HCT116 (cell line): ENCODE measurements at regions of chr2 and their contacts with region 1.

Region 1: GRCh38 chr2:70789304-70790135 is 923 bp downstream of the FIGLA start:
- DNase-seq: peak; percentile 46
- ATAC-seq: peak; percentile 90
- H3K4me3 ChIP-seq: peak overlapping the region; percentile 3 to 42; a peak in 3 of 4 replicates
- H3K27ac ChIP-seq: no peak overlapping the region
- H3K4me1 ChIP-seq: peaks cover 0 to 8% of the 10 kb centered on the region in 2 experiments; a peak in 2 of 4 replicates
- H3K27me3 ChIP-seq: no peaks in the 10 kb centered on the region
- CTCF ChIP-seq: peak; percentile 77 to 84 (median 77)
- POLR2A ChIP-seq: no peak
- RAD21 ChIP-seq: peak; percentile 89

Region 2: DNA sequence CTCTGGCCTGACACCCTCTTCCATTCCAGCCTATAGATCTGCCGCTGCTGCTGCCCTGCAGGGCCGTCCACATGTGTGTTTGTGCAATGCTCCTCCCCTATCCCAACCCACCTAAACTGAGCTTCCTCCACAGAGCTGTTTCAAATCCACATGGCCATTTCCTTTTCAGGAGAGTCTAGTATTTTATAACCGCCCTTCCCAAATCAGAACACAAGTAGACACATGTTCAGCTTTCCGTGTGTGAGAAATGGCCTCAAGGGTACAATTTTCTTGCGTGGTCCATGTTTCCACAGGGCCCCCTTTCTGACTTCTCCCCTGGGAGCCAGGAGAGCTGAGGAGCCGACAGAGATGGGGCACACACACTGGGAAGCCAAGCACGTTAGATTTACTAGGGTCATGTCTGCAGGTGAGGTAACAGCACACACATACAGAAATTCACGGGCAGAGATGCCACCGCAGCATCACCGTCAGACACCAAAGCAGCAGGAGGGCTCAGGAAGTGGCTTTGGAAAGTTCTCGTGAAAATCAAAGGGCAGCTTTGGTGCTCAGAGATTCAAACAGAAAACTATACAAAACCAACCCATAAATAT is 133.0 kb before region 1 on chr2:
- CTCF ChIA-PET with region 1: interaction called, 5 read pairs
- POLR2A ChIA-PET with region 1: no interaction called
- RAD21 ChIA-PET with region 1: no interaction called
- intact Hi-C with region 1: loop called (anchors 1 kb)
- DNase-seq: no peak
- ATAC-seq: no peak
- H3K4me3 ChIP-seq: no peak overlapping the region
- H3K27ac ChIP-seq: no peak overlapping the region
- H3K4me1 ChIP-seq: no peaks in the 10 kb centered on the region
- H3K27me3 ChIP-seq: no peaks in the 10 kb centered on the region
- CTCF ChIP-seq: no peak
- POLR2A ChIP-seq: no peak
- RAD21 ChIP-seq: no peak

Region 3: GRCh38 chr2:70686577-70687460 is 102.7 kb before region 1 on chr2:
- CTCF ChIA-PET with region 1: interaction called, 11 read pairs
- POLR2A ChIA-PET with region 1: no interaction called
- RAD21 ChIA-PET with region 1: no interaction called
- intact Hi-C with region 1: loop called (anchors 10 kb)
- DNase-seq: peak; percentile 48
- ATAC-seq: peak; percentile 99
- H3K4me3 ChIP-seq: no peak overlapping the region
- H3K27ac ChIP-seq: no peak overlapping the region; the same call in 1 of the 2 replicates
- H3K4me1 ChIP-seq: peaks cover 8 to 15% of the 10 kb centered on the region in 2 experiments; a peak in 3 of 4 replicates
- H3K27me3 ChIP-seq: no peaks in the 10 kb centered on the region
- CTCF ChIP-seq: peak; percentile 62 to 92 (median 71); a peak in 5 of 6 replicates
- POLR2A ChIP-seq: no peak
- RAD21 ChIP-seq: peak; percentile 47

Region 4: DNA sequence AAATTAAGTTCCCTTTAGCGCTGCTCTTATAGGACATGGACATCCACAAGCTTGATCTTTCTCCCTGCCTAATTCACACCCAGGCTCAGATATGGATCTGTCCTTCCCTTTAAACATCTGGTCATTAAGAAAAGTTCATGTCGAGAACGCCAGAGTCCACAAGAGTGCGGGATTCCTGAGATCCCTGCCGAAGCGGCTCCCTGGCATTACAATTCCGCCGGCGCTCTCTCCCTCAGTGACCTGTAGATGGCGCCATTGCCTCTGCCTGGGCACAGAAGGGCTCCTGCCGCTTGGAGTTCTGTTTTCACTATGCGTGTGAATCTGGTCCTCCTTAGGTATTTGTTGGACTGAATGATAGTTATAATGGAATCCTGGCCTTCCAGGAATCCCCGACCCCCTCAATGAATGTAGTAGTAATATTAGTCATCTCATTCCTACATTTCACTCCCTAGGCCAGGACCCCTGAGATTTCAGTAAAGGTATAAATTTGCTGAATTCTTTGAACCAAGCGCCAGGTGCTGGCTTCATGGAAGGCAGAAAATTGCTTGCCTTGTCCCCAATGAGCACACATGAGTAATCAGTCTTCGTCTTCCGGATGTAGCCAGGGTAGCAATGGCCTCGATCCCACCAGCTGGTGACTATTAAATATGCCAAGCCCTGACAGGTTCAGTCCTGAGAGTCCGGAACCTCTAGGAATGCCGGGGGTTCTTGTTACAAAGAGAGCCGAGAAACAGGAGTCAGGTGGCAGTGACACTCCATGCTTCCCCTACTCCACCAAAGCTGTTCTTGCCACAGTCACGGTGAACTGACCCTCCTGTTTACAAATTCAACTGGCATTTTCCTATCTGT is 72.5 kb after region 1 on chr2:
- CTCF ChIA-PET with region 1: interaction called, 7 read pairs
- POLR2A ChIA-PET with region 1: no interaction called
- RAD21 ChIA-PET with region 1: no interaction called
- intact Hi-C with region 1: loop called (anchors 1 kb)
- DNase-seq: peak; percentile 71
- ATAC-seq: peak; percentile 97
- H3K4me3 ChIP-seq: no peak overlapping the region; a peak in 1 of 4 replicates
- H3K27ac ChIP-seq: no peak overlapping the region
- H3K4me1 ChIP-seq: peaks cover 0 to 3% of the 10 kb centered on the region in 2 experiments; a peak in 1 of 4 replicates
- H3K27me3 ChIP-seq: no peaks in the 10 kb centered on the region
- CTCF ChIP-seq: peak; percentile 98 to 99 (median 99)
- POLR2A ChIP-seq: no peak
- RAD21 ChIP-seq: peak; percentile 92

Region 5: DNA sequence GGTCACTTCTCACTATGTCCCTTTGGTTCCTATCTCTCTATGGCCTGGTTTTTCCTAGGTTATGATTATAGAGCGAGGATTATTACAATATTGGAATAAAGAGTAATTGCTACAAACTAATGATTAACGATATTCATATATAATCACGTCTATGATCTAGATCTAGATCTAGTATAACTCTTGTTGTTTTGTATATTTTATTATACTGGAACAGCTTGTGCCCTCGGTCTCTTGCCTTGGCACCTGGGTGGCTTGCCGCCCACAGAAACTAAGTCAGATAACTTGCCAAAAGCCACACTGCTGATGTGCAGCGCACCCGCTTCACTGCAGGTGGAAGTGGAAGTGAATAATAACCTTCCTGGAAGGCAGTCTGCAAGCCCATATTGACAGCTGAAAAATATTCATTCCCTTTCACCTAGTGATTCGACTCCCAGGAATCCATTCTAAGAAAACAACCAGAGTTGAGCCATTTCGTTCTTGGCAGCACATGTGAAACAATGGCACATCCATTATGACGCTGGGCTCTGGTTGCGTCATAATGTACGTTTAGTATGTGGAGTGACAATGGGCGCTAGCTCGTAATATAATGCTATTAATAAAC is 188.2 kb after region 1 on chr2:
- CTCF ChIA-PET with region 1: no interaction called
- POLR2A ChIA-PET with region 1: no interaction called
- RAD21 ChIA-PET with region 1: no interaction called
- intact Hi-C with region 1: loop called (anchors 1 kb)
- DNase-seq: no peak
- ATAC-seq: no peak
- H3K4me3 ChIP-seq: peak overlapping the region in 1 of 2 experiments; percentile 64; a peak in 3 of 4 replicates
- H3K27ac ChIP-seq: no peak overlapping the region
- H3K4me1 ChIP-seq: peaks cover 7 to 21% of the 10 kb centered on the region in 2 experiments; a peak in 3 of 4 replicates
- H3K27me3 ChIP-seq: no peaks in the 10 kb centered on the region
- CTCF ChIP-seq: 0 out of 6 replicates have a peak, but pooled peaks of 1 of the 3 experiments have one; percentile 21
- POLR2A ChIP-seq: no peak
- RAD21 ChIP-seq: no peak

Region 6: GRCh38 chr2:72350852-72351251 is 1561.3 kb after region 1 on chr2:
- CTCF ChIA-PET with region 1: no interaction called
- POLR2A ChIA-PET with region 1: no interaction called
- RAD21 ChIA-PET with region 1: no interaction called
- intact Hi-C with region 1: no loop called
- DNase-seq: no peak
- ATAC-seq: no peak
- H3K4me3 ChIP-seq: no peak overlapping the region
- H3K27ac ChIP-seq: no peak overlapping the region
- H3K4me1 ChIP-seq: no peaks in the 10 kb centered on the region
- H3K27me3 ChIP-seq: no peaks in the 10 kb centered on the region
- CTCF ChIP-seq: no peak
- POLR2A ChIP-seq: no peak
- RAD21 ChIP-seq: no peak